AG04449 (cell line): ENCODE measurements at regions of chr14 and their contacts with region 1.

Region 1: GRCh38 chr14:21498553-21499526 is 12.3 kb downstream of the METTL3 start:
- DNase-seq: peak; percentile 19
- H3K4me3 ChIP-seq: no peak overlapping the region
- CTCF ChIP-seq: peak; percentile 33

Region 2: DNA sequence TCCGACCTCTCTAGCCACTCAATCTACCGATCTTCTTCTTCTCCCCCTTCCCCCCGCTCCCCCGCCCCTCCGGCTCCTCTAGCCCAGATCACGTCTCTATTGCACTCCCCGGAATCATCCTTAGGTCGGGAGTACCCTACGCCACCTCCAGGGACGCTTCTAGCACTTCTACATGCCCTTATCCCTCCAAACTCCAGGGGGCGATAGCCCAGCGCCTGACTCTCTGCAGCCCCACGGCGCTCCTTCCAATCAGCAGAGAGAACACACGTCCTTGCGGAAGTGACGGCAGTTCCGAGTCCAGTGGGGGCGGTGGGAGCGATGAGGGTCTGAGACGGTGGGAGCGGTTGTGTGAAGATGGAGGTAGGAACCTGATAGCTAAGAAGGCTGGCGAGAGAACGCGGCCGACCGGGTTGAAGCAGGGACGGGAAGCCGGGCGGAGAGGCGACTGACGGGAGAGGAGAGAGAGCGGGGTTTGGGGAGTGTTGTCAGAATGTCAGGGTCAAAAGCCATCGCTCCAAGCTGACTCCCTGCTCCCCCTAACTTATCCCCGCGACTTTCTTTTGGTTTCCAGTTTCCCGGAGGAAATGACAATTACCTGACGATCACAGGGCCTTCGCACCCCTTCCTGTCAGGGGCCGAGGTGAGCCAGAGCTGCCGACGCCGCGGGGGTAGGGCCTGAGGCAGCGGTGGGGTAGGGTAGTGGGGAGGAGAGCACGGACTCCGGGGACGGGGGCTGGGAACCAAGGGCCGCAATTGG is 21.7 kb before region 1 on chr14 and contains the starts of genes RAB2B and TOX4:
- CTCF ChIA-PET with region 1: interaction called, 107 read pairs
- POLR2A ChIA-PET with region 1: no interaction called
- DNase-seq: peak; percentile 94
- H3K4me3 ChIP-seq: peak within 1 kb of the TSS; percentile 94
- CTCF ChIP-seq: peak; percentile 97

Region 3: DNA sequence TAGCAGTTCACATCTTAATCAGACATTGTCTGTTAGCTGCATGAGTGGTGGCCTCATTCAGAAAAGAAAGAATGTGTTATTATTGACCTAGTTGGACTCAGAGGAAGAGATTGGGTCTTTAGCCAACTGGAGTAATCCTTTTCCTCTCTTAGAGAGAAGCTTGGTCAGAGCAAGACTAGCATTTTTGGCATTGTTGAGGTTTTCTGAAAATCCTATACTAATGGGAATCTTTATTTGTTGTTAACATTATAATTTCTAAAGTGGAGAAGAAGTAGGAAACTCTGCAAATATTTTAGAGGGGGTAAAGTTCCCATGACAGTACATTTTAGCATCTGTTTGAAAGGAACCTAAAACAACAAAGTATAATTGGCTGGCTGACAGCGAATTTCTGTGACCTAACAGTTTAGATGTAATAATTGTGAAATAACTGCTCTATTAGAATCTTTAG is 12.2 kb before region 1 on chr14:
- CTCF ChIA-PET with region 1: interaction called, 107 read pairs
- POLR2A ChIA-PET with region 1: no interaction called
- DNase-seq: peak; percentile 85
- H3K4me3 ChIP-seq: no peak overlapping the region
- CTCF ChIP-seq: no peak

Region 4: DNA sequence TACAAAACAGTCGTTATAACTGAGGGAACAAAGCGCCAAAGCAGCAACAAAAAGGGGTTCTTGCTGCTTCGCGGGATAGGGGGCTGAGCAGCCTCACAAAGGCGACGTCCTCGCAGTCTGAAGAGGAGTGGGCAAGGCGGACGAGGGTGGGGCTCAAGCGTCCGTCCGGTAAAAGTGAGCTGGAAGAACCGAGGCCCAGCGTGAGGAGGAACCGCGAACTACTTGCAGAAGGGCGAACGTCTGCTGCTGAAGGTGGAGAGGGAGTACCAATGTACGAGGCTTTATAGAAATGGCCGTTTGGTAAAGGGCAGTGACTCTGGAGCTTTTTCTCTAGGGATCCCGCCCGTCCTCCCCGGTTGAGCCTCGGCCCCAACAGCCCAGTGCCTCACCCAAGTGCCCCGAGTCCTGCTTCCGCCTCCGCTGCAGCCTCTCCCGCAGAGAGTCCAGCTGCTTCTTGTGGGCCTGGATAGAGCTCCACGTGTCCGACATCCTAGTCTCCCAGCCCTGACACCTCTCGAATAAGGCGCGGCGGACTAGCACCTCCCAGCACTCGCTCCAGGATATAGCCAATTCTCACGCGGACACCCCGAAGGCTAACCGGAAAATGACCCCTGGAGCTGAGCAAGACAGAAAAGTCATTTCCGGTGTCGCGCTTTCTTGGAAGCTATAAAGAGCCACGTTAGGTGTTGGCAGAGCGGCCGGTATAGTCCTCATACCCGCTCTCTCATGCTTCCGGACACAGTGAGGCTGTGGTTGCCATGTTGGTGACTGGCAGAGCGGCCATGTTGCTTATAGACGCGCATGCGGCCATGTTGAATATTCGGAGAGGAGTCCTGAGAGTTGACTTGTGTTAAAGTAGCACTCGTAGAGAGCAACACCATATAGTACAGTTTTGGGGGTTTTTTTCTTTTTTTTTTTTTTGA is 12.2 kb after region 1 on chr14 and contains the start of gene METTL3:
- CTCF ChIA-PET with region 1: interaction called, 39 read pairs
- POLR2A ChIA-PET with region 1: interaction called, 6 read pairs
- DNase-seq: peak; percentile 96
- H3K4me3 ChIP-seq: peak within 1 kb of the TSS; percentile 98
- CTCF ChIP-seq: no peak

Region 5: GRCh38 chr14:21557084-21557901 is 58.5 kb after region 1 on chr14:
- CTCF ChIA-PET with region 1: interaction called, 70 read pairs
- POLR2A ChIA-PET with region 1: no interaction called
- DNase-seq: peak; percentile 69
- H3K4me3 ChIP-seq: peak overlapping the region; percentile 40
- CTCF ChIP-seq: peak; percentile 42

Region 6: GRCh38 chr14:21589317-21589716 is 90.5 kb after region 1 on chr14:
- CTCF ChIA-PET with region 1: no interaction called
- POLR2A ChIA-PET with region 1: no interaction called
- DNase-seq: no peak
- H3K4me3 ChIP-seq: no peak overlapping the region
- CTCF ChIP-seq: no peak